Activated CD8-positive, alpha-beta T cell treated with anti-CD3 and anti-CD28 coated beads, Interleukin-2, amount 10 ng/mL, durations not matched to agents 7 days and 5 days (primary cell): ENCODE measurements at regions of chr5 and their contacts with region 1.

Region 1: GRCh38 chr5:138575194-138576015 is at the start of gene HSPA9:
- DNase-seq: peak; percentile 98
- ATAC-seq: peak; percentile 87
- H3K4me3 Mint-ChIP-seq: peak within 1 kb of the TSS; percentile 92
- H3K27ac Mint-ChIP-seq: peak within 1 kb of the TSS; percentile 100
- H3K4me1 Mint-ChIP-seq: peaks cover 35% of the 10 kb centered on the region
- H3K27me3 Mint-ChIP-seq: no peaks in the 10 kb centered on the region
- total RNA-seq, gene HSPA9: 214 to 216 TPM

Region 2: DNA sequence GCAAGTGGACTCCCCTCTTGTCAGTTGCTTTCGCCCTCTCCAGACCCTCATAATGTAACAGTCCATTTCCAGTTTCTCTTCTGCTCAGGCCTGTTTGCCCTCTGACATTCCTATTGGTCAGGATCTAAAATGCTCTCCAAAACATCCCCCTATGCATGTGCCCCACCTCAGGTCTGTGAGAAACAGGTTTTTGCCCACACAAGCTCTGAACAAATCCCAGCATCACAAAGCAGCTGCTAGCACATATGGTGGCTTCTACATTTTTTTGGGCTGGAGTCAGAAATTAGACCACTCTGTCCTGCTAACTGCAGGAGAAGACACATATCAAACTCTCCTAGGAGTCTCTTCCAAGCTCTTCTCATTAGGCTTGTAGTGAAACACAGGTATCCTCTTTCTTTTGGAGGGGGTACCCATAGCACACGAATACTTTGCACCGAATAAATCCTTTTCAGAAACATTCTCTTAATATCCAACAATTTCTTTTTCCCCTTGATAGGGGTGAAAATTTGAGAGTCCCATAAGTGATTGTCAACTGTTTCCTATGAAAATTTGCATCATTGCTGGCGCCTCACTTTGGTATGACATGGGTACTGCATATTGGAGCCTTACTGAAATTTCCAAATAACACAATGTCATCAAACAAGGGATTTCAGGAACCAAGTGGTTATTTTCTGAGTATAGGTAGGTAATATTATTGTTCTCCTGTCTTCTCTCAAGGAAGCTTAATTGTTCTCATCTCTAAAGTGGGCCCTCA is 19.1 kb after region 1 on chr5:
- CTCF ChIA-PET with region 1: interaction called, 16 read pairs
- POLR2A ChIA-PET with region 1: interaction called, 3 read pairs
- DNase-seq: no peak
- ATAC-seq: no peak
- H3K4me3 Mint-ChIP-seq: no peak overlapping the region
- H3K27ac Mint-ChIP-seq: no peak overlapping the region
- H3K4me1 Mint-ChIP-seq: no peaks in the 10 kb centered on the region
- H3K27me3 Mint-ChIP-seq: peaks cover 8% of the 10 kb centered on the region

Region 3: DNA sequence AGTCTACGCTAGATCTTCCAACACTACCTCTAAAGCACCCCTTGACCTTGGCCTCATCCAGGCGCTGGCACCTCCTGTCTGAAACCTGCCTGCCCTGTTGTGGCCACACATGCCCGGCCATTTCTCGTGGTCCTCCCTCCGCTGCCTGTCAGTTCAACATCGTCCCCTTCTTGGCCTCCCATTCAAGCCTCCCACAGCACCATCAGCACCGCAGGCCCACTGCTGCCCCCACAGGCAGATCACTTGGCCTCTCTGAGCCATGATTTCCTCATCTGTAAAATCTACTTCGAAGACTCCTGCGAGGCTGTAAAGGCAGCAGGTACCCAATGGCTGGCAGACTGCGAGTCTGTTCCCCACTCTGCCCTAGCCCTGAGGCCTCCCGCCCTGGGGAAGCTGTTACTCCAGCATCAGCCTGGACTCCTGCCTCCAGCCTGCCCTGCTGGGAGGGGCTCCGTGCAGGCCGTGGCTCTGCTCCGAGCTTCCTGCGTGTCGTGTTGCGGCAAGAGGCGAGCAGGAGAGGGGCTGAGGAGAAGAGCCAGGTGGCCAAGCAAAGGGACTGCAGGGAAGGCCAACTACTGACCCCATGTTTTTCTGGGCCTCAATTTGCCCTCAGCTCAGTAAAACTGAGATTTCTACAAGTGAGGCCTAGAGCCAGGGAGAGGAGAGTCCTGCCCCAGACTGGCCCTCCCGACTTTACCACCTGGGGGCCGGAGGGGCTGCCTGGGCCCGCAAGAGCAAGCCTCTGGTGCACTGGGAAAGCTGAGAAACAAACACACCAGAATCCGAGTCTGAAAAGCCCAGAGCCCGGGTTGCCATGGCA is 370.2 kb after region 1 on chr5:
- CTCF ChIA-PET with region 1: no interaction called
- POLR2A ChIA-PET with region 1: no interaction called
- DNase-seq: no peak
- ATAC-seq: no peak
- H3K4me3 Mint-ChIP-seq: no peak overlapping the region
- H3K27ac Mint-ChIP-seq: peak overlapping the region; percentile 49
- H3K4me1 Mint-ChIP-seq: peaks cover 11% of the 10 kb centered on the region
- H3K27me3 Mint-ChIP-seq: no peaks in the 10 kb centered on the region

Region 4: GRCh38 chr5:139262742-139263445 is 687.5 kb after region 1 on chr5:
- CTCF ChIA-PET with region 1: interaction called, 11 read pairs
- POLR2A ChIA-PET with region 1: no interaction called
- DNase-seq: peak; percentile 83
- ATAC-seq: peak; percentile 99
- H3K4me3 Mint-ChIP-seq: no peak overlapping the region
- H3K27ac Mint-ChIP-seq: no peak overlapping the region
- H3K4me1 Mint-ChIP-seq: peaks cover 20% of the 10 kb centered on the region
- H3K27me3 Mint-ChIP-seq: peaks cover 16% of the 10 kb centered on the region